ENCODE measurements at regions of chr13 and their contacts with region 1.

Region 1: DNA sequence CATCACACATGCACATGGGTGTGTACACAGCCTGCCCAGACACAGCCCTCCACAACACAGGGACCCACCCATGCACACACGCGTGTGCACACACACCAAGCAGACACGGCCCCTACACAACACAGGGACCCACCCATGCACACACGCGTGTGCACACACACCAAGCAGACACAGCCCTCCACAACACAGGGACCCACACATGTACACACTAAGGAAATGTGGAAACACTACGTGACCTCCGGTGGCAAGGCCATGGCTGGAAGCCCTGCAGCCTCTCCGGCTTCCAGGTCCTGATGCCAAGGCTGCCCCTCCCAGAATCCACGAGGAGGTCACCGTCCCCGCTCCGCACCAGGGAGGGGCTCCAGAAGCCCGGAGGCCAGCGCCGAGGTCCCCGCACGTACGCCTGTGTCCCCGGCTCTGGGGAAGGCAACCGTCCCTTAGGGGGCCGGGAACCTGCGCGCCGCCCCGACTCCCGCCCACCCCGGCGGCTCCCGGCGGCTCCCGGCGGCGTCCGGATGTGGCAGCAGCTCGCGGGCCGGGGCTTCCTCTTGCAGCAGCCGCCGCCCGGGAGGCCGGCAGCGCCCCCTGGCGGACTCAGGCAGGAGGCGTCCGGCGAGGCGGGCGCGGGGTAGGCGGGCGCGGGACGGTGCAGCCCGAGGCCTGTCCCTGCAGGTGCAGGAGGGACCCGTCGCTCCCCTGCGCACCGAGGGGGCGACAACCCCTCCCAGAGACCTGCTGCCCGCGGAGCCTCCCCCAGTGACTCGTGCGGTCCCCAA is 29.8 kb upstream of the GRTP1 start:
- DNase-seq: peak; percentile 83 to 94 (median 91)
- ATAC-seq: peak; percentile 91 to 92
- H3K4me3 ChIP-seq: peak overlapping the region; percentile 62
- H3K27ac ChIP-seq: no peak overlapping the region
- H3K4me1 ChIP-seq: peaks cover 2% of the 10 kb centered on the region
- H3K27me3 ChIP-seq: no peaks in the 10 kb centered on the region

Region 2: DNA sequence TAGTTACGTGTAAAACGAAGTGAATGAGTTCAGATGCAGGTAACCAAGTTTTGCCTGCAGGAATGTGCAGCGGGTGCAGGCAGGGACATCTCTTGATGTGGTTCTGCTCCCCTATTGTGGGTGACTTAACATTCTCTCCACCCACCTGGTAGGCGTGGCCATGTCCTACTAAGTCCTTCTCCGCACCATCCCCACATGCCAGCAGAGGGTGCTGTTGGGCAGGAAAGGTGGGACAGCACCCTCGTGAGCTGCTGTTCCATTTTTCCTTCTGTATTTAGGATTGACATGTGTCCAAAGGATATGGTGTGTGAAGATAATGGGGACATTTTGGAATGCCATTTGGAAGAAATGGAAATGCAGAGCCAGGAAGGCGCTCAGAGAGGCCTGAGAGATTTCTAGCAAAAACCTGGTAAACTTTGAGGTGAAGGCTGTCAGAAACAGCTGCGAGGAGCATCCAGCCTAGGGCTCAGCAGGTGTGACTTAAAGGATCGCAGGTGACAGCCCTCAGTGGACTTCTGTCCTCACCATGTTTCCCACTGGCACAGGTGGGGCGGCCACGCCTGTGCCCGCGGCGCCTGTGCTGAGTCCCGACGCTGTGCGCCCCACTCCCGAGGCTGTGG is 451.0 kb before region 1 on chr13:
- intact Hi-C with region 1: loop called in 2 of 4 experiments (anchors 5 to 10 kb)
- DNase-seq: peak; percentile 96 to 99 (median 98)
- ATAC-seq: peak; percentile 95 to 96
- H3K4me3 ChIP-seq: peak overlapping the region; percentile 68
- H3K27ac ChIP-seq: no peak overlapping the region
- H3K4me1 ChIP-seq: no peaks in the 10 kb centered on the region
- H3K27me3 ChIP-seq: no peaks in the 10 kb centered on the region

Region 3: DNA sequence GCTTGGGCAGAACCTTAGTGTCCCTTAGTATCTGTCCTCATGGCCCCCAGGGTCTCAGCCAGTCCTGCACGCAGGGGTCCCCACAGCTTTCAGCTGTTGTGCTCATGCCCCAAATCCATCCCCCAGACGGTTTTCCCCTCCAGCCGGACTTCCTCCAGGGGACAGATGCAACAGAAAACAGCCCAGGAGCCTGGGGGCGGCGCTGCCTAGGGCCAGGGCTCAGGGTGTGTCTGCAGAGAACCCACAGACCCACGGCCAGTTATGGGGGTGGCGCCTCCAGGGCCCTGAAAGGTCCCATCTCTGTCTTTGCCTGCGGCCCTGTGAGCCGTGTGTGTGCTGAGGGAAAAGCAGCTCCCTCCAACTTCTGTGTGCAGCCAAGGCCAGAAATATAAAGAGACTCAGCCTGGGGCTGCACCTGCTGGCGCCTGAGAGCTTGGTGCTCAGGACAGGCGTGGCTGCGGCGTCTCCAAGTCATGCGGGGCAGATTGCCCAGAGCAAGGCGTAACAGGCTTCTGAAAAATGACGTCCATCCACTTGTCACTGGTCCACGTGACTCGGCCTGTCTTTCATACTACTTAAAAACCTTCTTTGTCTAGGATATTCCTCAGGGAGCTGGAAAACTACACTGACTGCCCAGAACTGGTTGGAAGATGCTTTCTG is 310.2 kb before region 1 on chr13:
- intact Hi-C with region 1: no loop called
- DNase-seq: peak; percentile 84 to 91 (median 86)
- ATAC-seq: peak; percentile 72 to 76
- H3K4me3 ChIP-seq: no peak overlapping the region
- H3K27ac ChIP-seq: no peak overlapping the region
- H3K4me1 ChIP-seq: peaks cover 2% of the 10 kb centered on the region
- H3K27me3 ChIP-seq: no peaks in the 10 kb centered on the region

Region 4: GRCh38 chr13:113275387-113275786 is 118.4 kb before region 1 on chr13:
- intact Hi-C with region 1: loop called in 3 of 4 experiments (anchors 10 kb)
- DNase-seq: peak in 2 of 3 donors; percentile 28 to 60
- ATAC-seq: peak in 1 of 2 donors; percentile 66
- H3K4me3 ChIP-seq: no peak overlapping the region
- H3K27ac ChIP-seq: no peak overlapping the region
- H3K4me1 ChIP-seq: no peaks in the 10 kb centered on the region
- H3K27me3 ChIP-seq: no peaks in the 10 kb centered on the region

Measured in right cardiac atrium (tissue), 5 donors.